Activated CD4-positive, alpha-beta memory T cell treated with anti-CD3 and anti-CD28 coated beads for 36 hours (primary cell): ENCODE measurements at regions of chr7 and their contacts with region 1.

Region 1: GRCh38 chr7:10889266-10889898 is 84.3 kb upstream of the PHF14 start:
- DNase-seq: peak; percentile 50
- H3K4me3 Mint-ChIP-seq: peak overlapping the region; percentile 52
- H3K27ac Mint-ChIP-seq: no peak overlapping the region
- H3K4me1 Mint-ChIP-seq: peaks cover 10% of the 10 kb centered on the region
- H3K27me3 Mint-ChIP-seq: no peaks in the 10 kb centered on the region

Region 2: GRCh38 chr7:10418985-10419384 is 470.4 kb before region 1 on chr7:
- CTCF ChIA-PET with region 1: no interaction called
- POLR2A ChIA-PET with region 1: no interaction called
- intact Hi-C with region 1: loop called (anchors 5 kb)
- DNase-seq: no peak
- H3K4me3 Mint-ChIP-seq: no peak overlapping the region
- H3K27ac Mint-ChIP-seq: no peak overlapping the region
- H3K4me1 Mint-ChIP-seq: no peaks in the 10 kb centered on the region
- H3K27me3 Mint-ChIP-seq: no peaks in the 10 kb centered on the region

Region 3: DNA sequence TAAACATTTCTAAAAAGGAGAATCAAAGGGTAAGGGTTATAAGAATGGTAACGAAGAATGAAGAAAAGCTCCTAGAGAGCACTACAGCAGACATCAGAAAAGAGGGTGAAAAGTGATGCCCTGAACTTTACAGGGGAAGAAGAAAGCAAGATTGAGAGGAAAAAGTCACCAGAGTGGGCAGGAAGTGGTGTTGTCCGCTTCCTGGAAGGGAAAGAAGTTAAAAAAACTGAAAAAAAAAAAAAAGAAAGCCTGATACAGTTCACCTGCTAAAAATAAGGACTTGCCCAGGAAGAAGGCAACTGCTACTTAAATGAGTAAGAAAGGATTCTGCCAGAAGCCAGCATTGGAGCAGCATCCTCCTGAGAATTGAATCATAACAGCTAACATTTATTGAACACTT is 245.8 kb before region 1 on chr7:
- CTCF ChIA-PET with region 1: interaction called, 4 read pairs
- POLR2A ChIA-PET with region 1: no interaction called
- intact Hi-C with region 1: loop called (anchors 5 kb)
- DNase-seq: no peak
- H3K4me3 Mint-ChIP-seq: no peak overlapping the region
- H3K27ac Mint-ChIP-seq: no peak overlapping the region
- H3K4me1 Mint-ChIP-seq: peaks cover 6% of the 10 kb centered on the region
- H3K27me3 Mint-ChIP-seq: peaks cover 1% of the 10 kb centered on the region

Region 4: GRCh38 chr7:11212080-11212711 is 322.8 kb after region 1 on chr7:
- CTCF ChIA-PET with region 1: interaction called, 3 read pairs
- POLR2A ChIA-PET with region 1: no interaction called
- intact Hi-C with region 1: loop called (anchors 5 kb)
- DNase-seq: peak; percentile 52
- H3K4me3 Mint-ChIP-seq: no peak overlapping the region
- H3K27ac Mint-ChIP-seq: no peak overlapping the region
- H3K4me1 Mint-ChIP-seq: peaks cover 2% of the 10 kb centered on the region
- H3K27me3 Mint-ChIP-seq: peaks cover 6% of the 10 kb centered on the region

Region 5: GRCh38 chr7:11343818-11344413 is 454.5 kb after region 1 on chr7:
- CTCF ChIA-PET with region 1: no interaction called
- POLR2A ChIA-PET with region 1: no interaction called
- intact Hi-C with region 1: loop called (anchors 5 kb)
- DNase-seq: no peak
- H3K4me3 Mint-ChIP-seq: no peak overlapping the region
- H3K27ac Mint-ChIP-seq: no peak overlapping the region
- H3K4me1 Mint-ChIP-seq: peaks cover 7% of the 10 kb centered on the region
- H3K27me3 Mint-ChIP-seq: peaks cover 8% of the 10 kb centered on the region